Posterior vena cava (tissue), 2 donors: ENCODE measurements at regions of chr16 and their contacts with region 1.

Region 1: DNA sequence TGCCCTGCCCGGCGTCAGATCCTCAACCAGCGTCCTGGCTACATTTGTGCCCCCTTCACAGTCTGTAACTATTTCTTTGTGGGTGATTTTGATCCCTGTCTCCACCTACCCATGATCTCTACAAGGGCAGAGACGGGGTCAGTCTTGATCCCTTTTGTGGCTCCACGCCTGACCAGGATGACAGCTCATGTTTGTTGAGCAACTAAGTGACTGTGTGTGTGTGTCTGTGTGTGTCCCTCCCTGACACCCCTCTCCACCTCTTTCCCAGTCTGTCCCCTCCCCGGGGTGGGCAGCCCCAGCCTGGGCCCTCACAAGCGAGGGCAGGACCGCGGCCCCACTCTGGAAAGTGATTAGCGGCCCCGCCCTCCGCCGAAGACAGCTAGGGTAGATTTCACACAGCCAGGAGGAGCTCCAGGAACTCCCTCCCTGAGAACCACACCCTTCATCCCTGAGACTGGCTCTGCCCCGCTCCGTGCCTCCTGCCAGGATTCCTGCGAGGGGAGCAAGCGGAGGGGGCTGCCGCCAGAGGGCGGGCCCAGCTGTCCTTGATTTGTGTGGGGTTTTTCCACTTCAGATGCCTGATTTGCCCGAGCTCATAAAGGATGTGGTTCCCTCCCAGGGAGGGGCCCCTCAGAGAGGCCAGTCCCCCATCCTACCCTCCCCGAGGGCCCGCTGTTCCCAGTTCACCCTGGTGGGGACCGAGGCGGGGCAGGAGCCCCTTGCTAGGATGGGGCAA is 5.3 kb upstream of the HS3ST6 start:
- DNase-seq: no peak

Region 2: DNA sequence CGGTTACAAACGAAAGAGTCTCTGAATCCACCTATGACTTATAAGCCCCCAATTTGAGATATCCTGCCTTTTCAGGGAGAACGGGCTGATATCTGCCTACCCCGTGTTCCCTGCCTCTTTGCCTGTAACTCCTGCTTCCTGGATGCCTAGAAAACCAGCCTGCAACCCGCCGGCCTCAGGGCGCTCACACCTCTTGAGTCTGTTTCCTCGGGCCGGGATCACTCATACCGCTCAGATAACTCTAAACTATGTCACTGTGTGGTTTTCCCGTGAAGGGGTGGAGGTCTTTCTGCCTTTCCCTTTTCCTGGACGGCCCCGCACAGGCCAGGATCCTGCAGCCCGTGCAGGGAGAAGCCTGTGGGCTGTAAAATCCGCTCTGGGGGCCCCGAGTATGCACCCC is 1145.6 kb before region 1 on chr16:
- intact Hi-C with region 1: no loop called
- DNase-seq: no peak

Region 3: DNA sequence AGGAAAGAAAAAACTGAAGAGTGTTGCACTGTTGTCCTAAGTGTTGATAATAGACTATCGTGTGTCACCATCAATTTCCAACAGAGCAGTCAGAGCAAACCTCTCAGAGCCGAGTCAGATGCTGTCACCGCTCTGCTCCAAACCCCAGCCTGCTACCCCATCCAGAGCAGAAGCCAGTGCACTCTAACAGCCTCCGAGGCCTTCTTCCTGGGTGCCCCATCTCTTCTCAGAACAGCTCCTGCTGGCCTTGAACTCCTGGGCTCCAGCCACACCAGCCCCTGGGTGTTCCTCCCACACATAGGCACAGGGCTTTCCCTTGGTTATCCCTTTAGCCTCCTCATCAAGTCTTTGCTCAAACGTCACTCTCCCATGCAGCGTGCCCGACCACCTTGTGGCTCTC is 72.5 kb before region 1 on chr16:
- intact Hi-C with region 1: loop called in 1 of 2 experiments (anchors 5 kb)
- DNase-seq: no peak

Region 4: DNA sequence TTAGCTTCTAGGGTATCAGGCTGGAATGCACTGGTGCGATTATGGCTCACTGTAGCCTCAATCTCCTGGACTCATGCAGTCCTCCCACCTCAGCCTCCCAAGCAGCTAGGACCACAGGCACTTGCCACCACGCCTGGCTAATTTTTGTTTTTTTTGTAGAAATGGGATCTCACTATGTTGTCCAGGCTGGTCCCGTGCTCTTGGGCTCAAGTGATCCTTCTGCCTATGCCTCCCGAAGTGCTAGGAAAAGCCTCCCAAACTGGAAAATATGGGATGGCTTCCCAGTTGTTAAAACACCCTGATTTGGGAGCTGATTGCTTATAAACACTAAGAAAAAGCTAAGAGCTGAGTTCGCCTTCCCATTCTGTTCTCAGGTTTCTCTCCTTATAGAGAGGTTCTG is 1353.2 kb after region 1 on chr16:
- intact Hi-C with region 1: loop called in 1 of 2 experiments (anchors 5 kb)
- DNase-seq: peak; percentile 1